Endothelial cell of umbilical vein (primary cell): ENCODE measurements at regions of chr12 and their contacts with region 1.

Region 1: GRCh38 chr12:5511644-5512600 is 80.0 kb downstream of the NTF3 start:
- DNase-seq: peak; percentile 26
- H3K4me3 ChIP-seq: no peak overlapping the region
- H3K27ac ChIP-seq: no peak overlapping the region
- H3K4me1 ChIP-seq: no peaks in the 10 kb centered on the region
- H3K27me3 ChIP-seq: peaks cover 11 to 15% of the 10 kb centered on the region in 2 experiments
- CTCF ChIP-seq: peak; percentile 63 to 80
- POLR2A ChIP-seq: no peak

Region 2: DNA sequence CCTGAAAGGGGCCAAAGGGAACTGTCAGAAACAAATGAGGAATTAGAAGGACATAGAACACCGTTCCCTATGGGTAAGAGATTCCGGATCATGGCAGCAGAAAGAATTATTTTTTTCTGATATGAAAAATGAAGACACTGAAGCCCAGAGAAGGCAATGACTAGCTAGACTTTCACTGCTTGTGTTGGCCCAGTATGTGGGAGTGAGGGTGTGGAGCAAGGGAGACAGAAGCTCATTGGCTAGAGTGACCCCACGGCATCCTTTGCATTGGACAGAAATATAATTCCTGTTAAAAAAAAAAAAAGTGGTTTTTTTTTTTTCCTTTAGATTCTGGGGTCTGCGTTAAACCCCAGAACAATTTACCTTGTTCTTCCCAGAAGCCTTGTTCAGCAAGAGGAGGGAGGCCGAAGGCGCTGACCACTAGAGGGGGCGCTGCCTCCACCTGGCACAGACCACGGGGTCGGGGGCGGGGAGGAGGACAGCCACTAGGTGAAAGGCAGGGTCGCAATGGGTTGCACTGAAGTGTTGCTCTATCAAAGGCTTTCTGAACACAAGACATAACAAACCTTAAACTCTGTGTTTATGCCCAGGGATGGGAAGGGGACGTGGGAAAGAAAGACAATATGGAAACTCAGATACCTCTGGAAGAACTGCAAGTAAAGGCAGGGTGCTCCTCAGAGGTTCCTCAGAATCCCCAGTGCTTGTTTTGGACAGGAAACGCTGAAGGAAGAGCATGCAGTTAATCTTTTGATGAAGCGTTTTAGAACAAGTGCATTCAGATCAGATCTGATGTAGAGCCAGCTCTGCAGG is 311.4 kb before region 1 on chr12:
- CTCF ChIA-PET with region 1: interaction called, 10 read pairs
- POLR2A ChIA-PET with region 1: no interaction called
- dilution Hi-C with region 1: no loop called
- intact Hi-C with region 1: loop called (anchors 2 kb)
- DNase-seq: peak; percentile 28
- H3K4me3 ChIP-seq: no peak overlapping the region
- H3K27ac ChIP-seq: no peak overlapping the region
- H3K4me1 ChIP-seq: no peaks in the 10 kb centered on the region
- H3K27me3 ChIP-seq: no peaks in the 10 kb centered on the region
- CTCF ChIP-seq: peak; percentile 61 to 75
- POLR2A ChIP-seq: no peak

Region 3: GRCh38 chr12:5428332-5429221 is 83.3 kb before region 1 on chr12:
- CTCF ChIA-PET with region 1: interaction called, 49 read pairs
- POLR2A ChIA-PET with region 1: no interaction called
- dilution Hi-C with region 1: no loop called
- intact Hi-C with region 1: loop called (anchors 1 kb)
- DNase-seq: peak; percentile 50
- H3K4me3 ChIP-seq: no peak overlapping the region
- H3K27ac ChIP-seq: no peak overlapping the region
- H3K4me1 ChIP-seq: peaks cover 7% of the 10 kb centered on the region
- H3K27me3 ChIP-seq: peaks cover 62 to 81% of the 10 kb centered on the region in 2 experiments
- CTCF ChIP-seq: peak; percentile 39 to 53
- POLR2A ChIP-seq: no peak

Region 4: GRCh38 chr12:5444520-5444919 is 67.4 kb before region 1 on chr12:
- CTCF ChIA-PET with region 1: no interaction called
- POLR2A ChIA-PET with region 1: no interaction called
- dilution Hi-C with region 1: no loop called
- intact Hi-C with region 1: no loop called
- DNase-seq: no peak
- H3K4me3 ChIP-seq: no peak overlapping the region
- H3K27ac ChIP-seq: no peak overlapping the region
- H3K4me1 ChIP-seq: no peaks in the 10 kb centered on the region
- H3K27me3 ChIP-seq: peaks cover 42 to 48% of the 10 kb centered on the region in 2 experiments
- CTCF ChIP-seq: no peak
- POLR2A ChIP-seq: no peak